Natural killer cell (primary cell): ENCODE measurements at regions of chr2 and their contacts with region 1.

Region 1: DNA sequence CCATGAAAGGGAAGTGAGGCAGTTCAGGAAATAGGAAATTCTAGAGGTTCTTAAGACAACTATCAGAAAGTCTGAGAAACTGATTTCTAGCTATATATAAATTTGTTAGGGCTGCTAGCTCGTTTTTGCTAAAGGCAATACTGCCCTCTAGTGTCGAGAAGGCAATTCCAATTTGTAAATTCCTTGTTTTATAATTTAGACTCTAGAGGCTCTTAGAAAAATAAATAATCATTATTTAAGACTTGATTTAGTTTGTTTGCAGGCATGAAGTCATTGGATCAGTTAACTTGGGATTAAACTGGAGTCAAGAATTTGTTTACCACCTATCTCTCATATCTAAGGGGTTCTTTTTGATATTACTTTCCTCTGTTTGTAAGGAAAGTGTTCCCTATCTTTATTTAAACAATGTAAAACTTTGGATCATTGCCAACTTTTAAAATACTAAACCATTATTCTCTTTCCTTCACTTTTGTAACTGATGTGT is 66.2 kb downstream of the ACVR2A start:
- DNase-seq: peak in 1 of 2 donors; percentile 78
- ATAC-seq: no peak
- H3K4me3 ChIP-seq: no peak overlapping the region
- H3K4me3 Mint-ChIP-seq: no peak overlapping the region
- H3K27ac ChIP-seq: no peak overlapping the region
- H3K27ac Mint-ChIP-seq: no peak overlapping the region
- H3K4me1 ChIP-seq: no peaks in the 10 kb centered on the region
- H3K4me1 Mint-ChIP-seq: peaks cover 9 to 14% of the 10 kb centered on the region in 2 donors
- H3K27me3 ChIP-seq: no peaks in the 10 kb centered on the region
- H3K27me3 Mint-ChIP-seq: no peaks in the 10 kb centered on the region
- CTCF ChIP-seq: peak; percentile 84

Region 2: GRCh38 chr2:146734042-146734820 is 1176.8 kb before region 1 on chr2:
- intact Hi-C with region 1: loop called (anchors 10 kb)
- DNase-seq: peak in 1 of 2 donors; percentile 10
- ATAC-seq: no peak
- H3K4me3 ChIP-seq: no peak overlapping the region
- H3K4me3 Mint-ChIP-seq: no peak overlapping the region
- H3K27ac ChIP-seq: no peak overlapping the region
- H3K27ac Mint-ChIP-seq: no peak overlapping the region
- H3K4me1 ChIP-seq: no peaks in the 10 kb centered on the region
- H3K4me1 Mint-ChIP-seq: no peaks in the 10 kb centered on the region
- H3K27me3 ChIP-seq: no peaks in the 10 kb centered on the region
- H3K27me3 Mint-ChIP-seq: no peaks in the 10 kb centered on the region
- CTCF ChIP-seq: no peak

Region 3: GRCh38 chr2:147045113-147045512 is 865.9 kb before region 1 on chr2:
- intact Hi-C with region 1: loop called (anchors 1 kb)
- DNase-seq: peak in 1 of 2 donors; percentile 55
- ATAC-seq: no peak
- H3K4me3 ChIP-seq: no peak overlapping the region
- H3K4me3 Mint-ChIP-seq: no peak overlapping the region
- H3K27ac ChIP-seq: no peak overlapping the region
- H3K27ac Mint-ChIP-seq: no peak overlapping the region
- H3K4me1 ChIP-seq: no peaks in the 10 kb centered on the region
- H3K4me1 Mint-ChIP-seq: peaks cover 0 to 5% of the 10 kb centered on the region in 2 donors
- H3K27me3 ChIP-seq: no peaks in the 10 kb centered on the region
- H3K27me3 Mint-ChIP-seq: peaks cover 3 to 26% of the 10 kb centered on the region in 2 donors
- CTCF ChIP-seq: peak; percentile 59

Region 4: DNA sequence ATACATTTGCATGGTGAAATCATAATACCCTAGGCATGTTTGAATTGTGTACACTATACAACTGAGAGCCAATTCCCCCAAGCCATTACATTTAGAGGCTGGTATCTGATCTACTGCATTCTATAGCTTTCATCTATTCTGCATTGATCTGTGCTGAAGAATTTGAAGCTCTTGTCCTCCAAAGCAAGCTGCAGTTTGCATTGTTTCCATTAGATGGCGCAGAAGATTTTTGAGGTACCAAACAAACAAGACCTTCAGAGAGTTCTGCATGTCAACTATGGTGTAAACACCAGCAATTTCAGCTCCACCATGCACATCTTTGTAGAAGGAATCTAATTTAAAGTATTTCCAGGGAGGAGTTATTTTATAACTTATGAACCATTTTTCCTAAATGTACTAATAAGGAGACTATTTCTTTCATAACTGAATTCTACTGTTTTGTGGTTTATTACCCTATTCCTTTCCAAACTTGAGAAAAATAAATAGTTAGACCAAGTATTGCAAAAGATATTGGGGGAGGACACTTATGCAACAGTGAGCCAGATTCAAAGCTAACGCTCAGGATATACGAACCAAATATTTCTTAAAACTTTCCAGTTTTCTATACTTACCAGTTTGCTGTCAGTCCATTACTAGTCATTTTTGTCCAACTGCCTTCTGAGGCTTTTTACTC is 828.0 kb before region 1 on chr2:
- intact Hi-C with region 1: loop called (anchors 1 kb)
- DNase-seq: peak; percentile 17 to 73
- ATAC-seq: peak; percentile 49 to 54 (median 52)
- H3K4me3 ChIP-seq: no peak overlapping the region
- H3K4me3 Mint-ChIP-seq: no peak overlapping the region
- H3K27ac ChIP-seq: no peak overlapping the region
- H3K27ac Mint-ChIP-seq: no peak overlapping the region
- H3K4me1 ChIP-seq: no peaks in the 10 kb centered on the region
- H3K4me1 Mint-ChIP-seq: no peaks in the 10 kb centered on the region
- H3K27me3 ChIP-seq: peaks cover 2% of the 10 kb centered on the region
- H3K27me3 Mint-ChIP-seq: peaks cover 6 to 34% of the 10 kb centered on the region in 2 donors
- CTCF ChIP-seq: peak; percentile 85

Region 5: DNA sequence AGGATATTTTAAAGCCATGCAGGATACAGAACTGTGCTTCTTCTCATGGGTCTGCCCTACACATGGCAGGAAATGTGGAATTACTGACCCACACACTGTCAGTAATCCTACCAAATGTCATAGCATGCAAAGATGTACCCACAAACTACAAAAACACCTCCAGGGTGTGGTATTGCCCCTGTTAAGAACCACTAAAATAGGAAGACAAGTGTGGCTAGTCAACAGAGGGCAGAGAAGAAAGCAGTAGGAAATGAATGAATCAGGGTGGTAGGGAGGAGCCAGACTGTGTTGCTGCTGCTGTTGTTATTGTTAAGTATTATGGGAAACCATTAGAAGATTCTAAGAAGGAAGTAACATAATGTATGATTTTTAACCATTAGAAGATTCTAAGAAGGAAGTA is 622.9 kb before region 1 on chr2:
- intact Hi-C with region 1: loop called (anchors 1 kb)
- DNase-seq: peak in 1 of 2 donors; percentile 56
- ATAC-seq: peak; percentile 72 to 86 (median 82)
- H3K4me3 ChIP-seq: no peak overlapping the region
- H3K4me3 Mint-ChIP-seq: no peak overlapping the region
- H3K27ac ChIP-seq: no peak overlapping the region
- H3K27ac Mint-ChIP-seq: peak overlapping the region; percentile 1 to 61
- H3K4me1 ChIP-seq: no peaks in the 10 kb centered on the region
- H3K4me1 Mint-ChIP-seq: peaks cover 14 to 25% of the 10 kb centered on the region in 2 donors
- H3K27me3 ChIP-seq: no peaks in the 10 kb centered on the region
- H3K27me3 Mint-ChIP-seq: no peaks in the 10 kb centered on the region
- CTCF ChIP-seq: peak; percentile 23